ENCODE measurements at regions of chr11 and their contacts with region 1.

Region 1: GRCh38 chr11:3854977-3855807 is at the start of gene STIM1:
- DNase-seq: peak; percentile 96
- H3K4me3 ChIP-seq: peak within 1 kb of the TSS; percentile 81
- H3K27ac ChIP-seq: peak within 1 kb of the TSS; percentile 94
- H3K4me1 ChIP-seq: peaks cover 62% of the 10 kb centered on the region
- CTCF ChIP-seq: peak; percentile 89
- total RNA-seq, gene STIM1: 20.9 and 21.0 TPM in 2 replicates

Region 2: GRCh38 chr11:3867209-3868091 is 12.3 kb after region 1 on chr11:
- CTCF ChIA-PET with region 1: interaction called, 7 read pairs
- POLR2A ChIA-PET with region 1: interaction called, 29 read pairs
- intact Hi-C with region 1: no loop called
- DNase-seq: peak; percentile 67
- H3K4me3 ChIP-seq: no peak overlapping the region
- H3K27ac ChIP-seq: peak overlapping the region; percentile 63
- H3K4me1 ChIP-seq: peaks cover 50% of the 10 kb centered on the region
- CTCF ChIP-seq: no peak

Region 3: GRCh38 chr11:3880724-3881123 is 25.5 kb after region 1 on chr11:
- CTCF ChIA-PET with region 1: interaction called, 4 read pairs
- POLR2A ChIA-PET with region 1: interaction called, 13 read pairs
- intact Hi-C with region 1: no loop called
- DNase-seq: peak; percentile 69
- H3K4me3 ChIP-seq: peak overlapping the region; percentile 35
- H3K27ac ChIP-seq: peak overlapping the region; percentile 12
- H3K4me1 ChIP-seq: peaks cover 55% of the 10 kb centered on the region
- CTCF ChIP-seq: no peak

Region 4: GRCh38 chr11:3894128-3894731 is 39.0 kb after region 1 on chr11:
- CTCF ChIA-PET with region 1: interaction called, 12 read pairs
- POLR2A ChIA-PET with region 1: interaction called, 24 read pairs
- intact Hi-C with region 1: loop called (anchors 2 kb)
- DNase-seq: peak; percentile 95
- H3K4me3 ChIP-seq: peak overlapping the region; percentile 57
- H3K27ac ChIP-seq: peak overlapping the region; percentile 90
- H3K4me1 ChIP-seq: peaks cover 53% of the 10 kb centered on the region
- CTCF ChIP-seq: no peak

Region 5: GRCh38 chr11:3947061-3947460 is 91.9 kb after region 1 on chr11:
- CTCF ChIA-PET with region 1: interaction called, 10 read pairs
- POLR2A ChIA-PET with region 1: interaction called, 9 read pairs
- intact Hi-C with region 1: loop called (anchors 2 kb)
- DNase-seq: peak; percentile 88
- H3K4me3 ChIP-seq: peak overlapping the region; percentile 52
- H3K27ac ChIP-seq: peak overlapping the region; percentile 96
- H3K4me1 ChIP-seq: peaks cover 74% of the 10 kb centered on the region
- CTCF ChIP-seq: no peak

Region 6: GRCh38 chr11:4066910-4067309 is 211.7 kb after region 1 on chr11:
- CTCF ChIA-PET with region 1: interaction called, 36 read pairs
- POLR2A ChIA-PET with region 1: interaction called, 38 read pairs
- intact Hi-C with region 1: loop called (anchors 1 kb)
- DNase-seq: no peak
- H3K4me3 ChIP-seq: no peak overlapping the region
- H3K27ac ChIP-seq: no peak overlapping the region
- H3K4me1 ChIP-seq: peaks cover 16% of the 10 kb centered on the region
- CTCF ChIP-seq: no peak

Region 7: GRCh38 chr11:4211991-4212390 is 356.8 kb after region 1 on chr11:
- CTCF ChIA-PET with region 1: no interaction called
- POLR2A ChIA-PET with region 1: no interaction called
- intact Hi-C with region 1: no loop called
- DNase-seq: no peak
- H3K4me3 ChIP-seq: no peak overlapping the region
- H3K27ac ChIP-seq: no peak overlapping the region
- H3K4me1 ChIP-seq: no peaks in the 10 kb centered on the region
- CTCF ChIP-seq: no peak